ENCODE measurements at regions of chr22 and their contacts with region 1.

Region 1: GRCh38 chr22:41565403-41566054 is 4.7 kb downstream of the CSDC2 start:
- DNase-seq: peak; percentile 89
- ATAC-seq: peak; percentile 64
- H3K4me3 ChIP-seq: no peak overlapping the region
- H3K27ac ChIP-seq: peak overlapping the region; percentile 83
- H3K4me1 ChIP-seq: peaks cover 20% of the 10 kb centered on the region
- H3K27me3 ChIP-seq: no peaks in the 10 kb centered on the region
- CTCF ChIP-seq: no peak
- POLR2A ChIP-seq: no peak
- RAD21 ChIP-seq: no peak

Region 2: GRCh38 chr22:41062146-41062545 is 503.4 kb before region 1 on chr22:
- CTCF ChIA-PET with region 1: no interaction called
- POLR2A ChIA-PET with region 1: no interaction called
- dilution Hi-C with region 1: no loop called
- in situ Hi-C with region 1: no loop called
- intact Hi-C with region 1: no loop called
- DNase-seq: no peak
- ATAC-seq: no peak
- H3K4me3 ChIP-seq: no peak overlapping the region
- H3K27ac ChIP-seq: no peak overlapping the region
- H3K4me1 ChIP-seq: no peaks in the 10 kb centered on the region
- H3K27me3 ChIP-seq: no peaks in the 10 kb centered on the region
- CTCF ChIP-seq: no peak
- POLR2A ChIP-seq: no peak
- RAD21 ChIP-seq: no peak

Region 3: GRCh38 chr22:41576877-41577276 is 11.3 kb after region 1 on chr22:
- CTCF ChIA-PET with region 1: interaction called, 4 read pairs
- POLR2A ChIA-PET with region 1: interaction called, 20 read pairs
- dilution Hi-C with region 1: no loop called
- in situ Hi-C with region 1: no loop called
- intact Hi-C with region 1: no loop called
- DNase-seq: peak; percentile 52
- ATAC-seq: peak; percentile 52
- H3K4me3 ChIP-seq: no peak overlapping the region
- H3K27ac ChIP-seq: no peak overlapping the region
- H3K4me1 ChIP-seq: peaks cover 7% of the 10 kb centered on the region; the same call in 1 of the 2 replicates
- H3K27me3 ChIP-seq: no peaks in the 10 kb centered on the region
- CTCF ChIP-seq: peak; percentile 64
- POLR2A ChIP-seq: no peak
- RAD21 ChIP-seq: peak; percentile 59